BJ (cell line): ENCODE measurements at regions of chr1 and their contacts with region 1.

Region 1: GRCh38 chr1:94926915-94927404 is at the start of gene CNN3:
- DNase-seq: peak; percentile 47
- H3K4me3 ChIP-seq: peak within 1 kb of the TSS; percentile 95
- H3K27me3 ChIP-seq: no peaks in the 10 kb centered on the region
- CTCF ChIP-seq: no peak
- polyA plus RNA-seq, gene CNN3: 169 and 217 TPM in 2 replicates

Region 2: GRCh38 chr1:94863919-94864318 is 63.0 kb before region 1 on chr1:
- CTCF ChIA-PET with region 1: interaction called, 17 read pairs
- POLR2A ChIA-PET with region 1: no interaction called
- DNase-seq: no peak
- H3K4me3 ChIP-seq: no peak overlapping the region
- H3K27me3 ChIP-seq: no peaks in the 10 kb centered on the region
- CTCF ChIP-seq: no peak

Region 3: DNA sequence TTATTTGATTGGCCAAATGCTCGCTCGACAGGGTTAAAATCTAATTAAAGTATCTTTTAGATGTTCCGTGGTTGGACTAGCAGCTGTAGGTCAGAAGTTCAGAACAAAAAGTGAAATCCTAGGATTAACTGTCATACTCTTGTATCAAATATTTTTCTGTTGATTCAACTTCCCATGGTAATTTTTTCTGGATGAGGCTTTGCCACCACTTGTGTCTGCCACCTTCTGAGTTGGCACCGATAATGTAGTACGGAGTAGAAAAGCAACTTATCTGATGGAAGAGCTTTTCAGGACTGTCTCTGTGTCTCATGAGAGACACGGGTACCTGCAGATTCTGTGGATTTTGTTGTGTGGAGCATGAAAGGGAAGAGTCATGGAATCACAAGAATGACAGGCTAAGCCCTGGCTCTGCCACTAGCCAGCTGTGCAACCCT is 44.5 kb after region 1 on chr1:
- CTCF ChIA-PET with region 1: no interaction called
- POLR2A ChIA-PET with region 1: no interaction called
- DNase-seq: no peak
- H3K4me3 ChIP-seq: no peak overlapping the region
- H3K27me3 ChIP-seq: no peaks in the 10 kb centered on the region
- CTCF ChIP-seq: no peak